ENCODE measurements at regions of chr9 and their contacts with region 1.

Region 1: GRCh38 chr9:100216178-100216787 is 117.2 kb downstream of the INVS start:
- DNase-seq: peak; percentile 37 to 55
- ATAC-seq: peak; percentile 43 to 89 (median 82)
- H3K4me3 ChIP-seq: no peak overlapping the region
- H3K27ac ChIP-seq: no peak overlapping the region
- H3K4me1 ChIP-seq: peaks cover 2% of the 10 kb centered on the region
- H3K27me3 ChIP-seq: no peaks in the 10 kb centered on the region
- CTCF ChIP-seq: peak; percentile 63

Region 2: GRCh38 chr9:99184475-99185347 is 1031.6 kb before region 1 on chr9:
- intact Hi-C with region 1: loop called in 1 of 2 experiments (anchors 10 kb)
- DNase-seq: peak; percentile 86 to 92
- ATAC-seq: peak; percentile 88 to 97 (median 94)
- H3K4me3 ChIP-seq: peak overlapping the region; percentile 54
- H3K27ac ChIP-seq: no peak overlapping the region
- H3K4me1 ChIP-seq: no peaks in the 10 kb centered on the region
- H3K27me3 ChIP-seq: no peaks in the 10 kb centered on the region
- CTCF ChIP-seq: peak; percentile 96

Region 3: GRCh38 chr9:99948896-99949295 is 267.4 kb before region 1 on chr9:
- intact Hi-C with region 1: no loop called
- DNase-seq: no peak
- ATAC-seq: no peak
- H3K4me3 ChIP-seq: no peak overlapping the region
- H3K27ac ChIP-seq: no peak overlapping the region
- H3K4me1 ChIP-seq: no peaks in the 10 kb centered on the region
- H3K27me3 ChIP-seq: no peaks in the 10 kb centered on the region
- CTCF ChIP-seq: no peak

Region 4: GRCh38 chr9:100098887-100099721 is 117.2 kb before region 1 on chr9 and contains the starts of genes ERP44 and INVS:
- intact Hi-C with region 1: loop called in 1 of 2 experiments (anchors 10 kb)
- DNase-seq: peak; percentile 99
- ATAC-seq: peak; percentile 95 to 98 (median 97)
- H3K4me3 ChIP-seq: peak within 1 kb of the TSS; percentile 99
- H3K27ac ChIP-seq: peak within 1 kb of the TSS; percentile 97
- H3K4me1 ChIP-seq: peaks cover 32% of the 10 kb centered on the region
- H3K27me3 ChIP-seq: no peaks in the 10 kb centered on the region
- CTCF ChIP-seq: no peak
- total RNA-seq, gene ERP44: 7.5 to 12.1 (median 9.9) TPM
- total RNA-seq, gene INVS: 4.1 to 7.3 (median 5.9) TPM

Region 5: GRCh38 chr9:100759215-100759614 is 542.9 kb after region 1 on chr9:
- intact Hi-C with region 1: no loop called
- DNase-seq: no peak
- ATAC-seq: no peak
- H3K4me3 ChIP-seq: no peak overlapping the region
- H3K27ac ChIP-seq: no peak overlapping the region
- H3K4me1 ChIP-seq: no peaks in the 10 kb centered on the region
- H3K27me3 ChIP-seq: peaks cover 0 to 2% (median 0%) of the 10 kb centered on the region in 3 donors
- CTCF ChIP-seq: no peak